ENCODE measurements at regions of chr5 and their contacts with region 1.

Region 1: DNA sequence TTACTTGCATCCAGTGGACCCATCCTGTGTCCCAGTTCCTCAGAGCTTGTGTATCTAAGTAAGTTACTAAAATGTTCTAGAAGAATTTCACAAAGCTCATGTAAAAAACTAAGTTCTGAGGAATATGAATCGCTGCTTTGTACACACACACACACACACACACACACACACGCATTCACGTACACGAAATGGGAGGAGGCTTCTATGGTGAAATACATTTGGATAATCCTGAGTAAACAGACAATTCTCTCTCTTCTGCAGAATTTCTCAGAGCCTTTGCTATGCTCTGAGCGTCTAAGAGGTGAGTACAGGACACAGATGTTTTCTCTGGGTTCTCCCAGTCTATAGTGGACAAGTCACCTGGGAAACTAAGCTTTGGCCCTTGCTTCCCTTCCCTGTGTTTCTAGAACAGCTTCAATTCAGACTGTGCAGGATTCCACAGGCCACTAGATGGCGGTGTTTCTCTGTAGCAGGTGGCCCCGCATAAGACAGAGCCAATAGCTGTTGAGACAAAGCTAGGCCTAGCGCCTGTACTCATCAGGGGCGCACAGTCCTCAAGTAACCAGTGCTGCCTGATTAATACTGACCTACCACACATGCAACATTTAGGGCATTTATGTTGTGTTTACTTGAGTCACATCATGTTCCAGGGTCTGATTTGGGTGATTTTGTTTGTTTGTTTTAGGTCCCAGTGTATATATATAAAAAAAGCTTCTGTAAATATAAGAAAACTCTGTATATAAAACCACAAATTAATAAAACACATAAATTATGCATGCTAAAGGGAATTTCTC is 114.8 kb downstream of the LIFR start:
- DNase-seq: peak; percentile 89 to 90
- H3K4me3 ChIP-seq: no peak overlapping the region
- H3K4me3 Mint-ChIP-seq: no peak overlapping the region
- H3K27ac Mint-ChIP-seq: no peak overlapping the region
- H3K4me1 ChIP-seq: no peaks in the 10 kb centered on the region
- H3K4me1 Mint-ChIP-seq: no peaks in the 10 kb centered on the region
- H3K27me3 ChIP-seq: no peaks in the 10 kb centered on the region
- H3K27me3 Mint-ChIP-seq: no peaks in the 10 kb centered on the region
- CTCF ChIP-seq: peak; percentile 93 to 97

Region 2: DNA sequence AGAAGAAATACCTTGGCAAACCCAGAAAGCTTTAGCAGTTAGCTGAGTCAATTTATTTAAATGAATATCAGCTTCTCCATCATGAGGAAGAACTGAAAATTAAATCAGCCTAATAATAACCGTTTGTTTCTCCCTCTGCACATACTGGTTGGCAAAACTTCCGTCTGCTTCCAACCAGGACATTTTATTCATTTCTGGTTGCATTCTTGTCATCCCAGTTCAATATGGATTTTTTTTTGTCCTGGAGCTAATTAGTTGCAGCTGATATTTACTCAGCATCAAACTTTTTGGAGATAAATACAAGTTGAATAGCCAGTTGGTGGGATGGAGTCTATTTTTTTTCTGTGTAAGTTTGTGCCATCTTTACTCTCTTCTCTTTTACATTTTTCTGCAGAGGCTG is 475.4 kb before region 1 on chr5:
- CTCF ChIA-PET with region 1: no interaction called
- POLR2A ChIA-PET with region 1: no interaction called
- intact Hi-C with region 1: no loop called
- DNase-seq: no peak
- H3K4me3 ChIP-seq: no peak overlapping the region
- H3K4me3 Mint-ChIP-seq: no peak overlapping the region
- H3K27ac Mint-ChIP-seq: no peak overlapping the region
- H3K4me1 ChIP-seq: no peaks in the 10 kb centered on the region
- H3K4me1 Mint-ChIP-seq: no peaks in the 10 kb centered on the region
- H3K27me3 ChIP-seq: no peaks in the 10 kb centered on the region
- H3K27me3 Mint-ChIP-seq: peaks cover 12% of the 10 kb centered on the region
- CTCF ChIP-seq: no peak

Region 3: GRCh38 chr5:38265546-38266179 is 176.0 kb before region 1 on chr5:
- CTCF ChIA-PET with region 1: no interaction called
- POLR2A ChIA-PET with region 1: no interaction called
- intact Hi-C with region 1: no loop called
- DNase-seq: peak; percentile 65 to 81
- H3K4me3 ChIP-seq: no peak overlapping the region
- H3K4me3 Mint-ChIP-seq: no peak overlapping the region
- H3K27ac Mint-ChIP-seq: no peak overlapping the region
- H3K4me1 ChIP-seq: no peaks in the 10 kb centered on the region; the same call in 1 of the 2 replicates
- H3K4me1 Mint-ChIP-seq: peaks cover 6% of the 10 kb centered on the region
- H3K27me3 ChIP-seq: no peaks in the 10 kb centered on the region; the same call in 1 of the 2 replicates
- H3K27me3 Mint-ChIP-seq: peaks cover 16% of the 10 kb centered on the region
- CTCF ChIP-seq: peak; percentile 79 to 82

Region 4: DNA sequence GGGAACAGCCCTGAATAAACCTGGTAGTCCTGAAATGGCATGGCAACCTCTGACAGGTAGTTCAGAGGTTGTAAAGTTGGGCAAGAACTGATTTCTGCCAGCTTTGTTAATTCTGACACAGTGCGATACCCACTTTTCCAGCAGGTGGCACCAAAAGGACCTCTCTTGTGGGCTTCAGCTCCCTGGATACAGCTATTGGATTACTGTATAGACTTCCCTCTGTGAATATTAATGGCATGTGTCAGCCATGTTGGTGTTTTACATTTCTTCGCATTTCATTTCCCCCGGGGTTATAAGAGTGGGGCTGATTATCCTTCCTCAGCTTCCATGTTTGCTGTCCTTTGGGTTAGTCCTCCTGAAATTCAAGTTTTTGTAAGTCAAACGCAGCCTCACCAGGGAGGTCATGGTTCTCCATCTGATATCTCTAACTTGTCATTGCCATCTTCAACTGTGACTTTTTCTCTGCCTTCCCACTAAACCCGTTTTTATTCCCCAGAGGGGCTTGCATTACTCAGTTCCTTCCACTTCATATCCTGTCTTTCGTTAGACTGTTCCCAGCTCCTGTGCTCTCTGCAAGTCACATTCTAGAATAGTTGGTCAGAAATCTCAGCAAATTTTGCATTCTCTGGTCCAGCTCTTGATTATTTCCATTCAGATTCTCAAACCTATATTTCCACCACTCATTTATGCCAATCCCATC is 20.8 kb before region 1 on chr5:
- CTCF ChIA-PET with region 1: interaction called, 64 read pairs
- POLR2A ChIA-PET with region 1: no interaction called
- intact Hi-C with region 1: loop called (anchors 1 kb)
- DNase-seq: peak; percentile 65 to 74
- H3K4me3 ChIP-seq: no peak overlapping the region
- H3K4me3 Mint-ChIP-seq: no peak overlapping the region
- H3K27ac Mint-ChIP-seq: no peak overlapping the region
- H3K4me1 ChIP-seq: no peaks in the 10 kb centered on the region
- H3K4me1 Mint-ChIP-seq: no peaks in the 10 kb centered on the region
- H3K27me3 ChIP-seq: no peaks in the 10 kb centered on the region
- H3K27me3 Mint-ChIP-seq: no peaks in the 10 kb centered on the region
- CTCF ChIP-seq: peak; percentile 69 to 79

Region 5: GRCh38 chr5:38483788-38484398 is 42.2 kb after region 1 on chr5:
- CTCF ChIA-PET with region 1: interaction called, 18 read pairs
- POLR2A ChIA-PET with region 1: no interaction called
- intact Hi-C with region 1: loop called (anchors 5 kb)
- DNase-seq: peak in 1 of 2 experiments; percentile 36
- H3K4me3 ChIP-seq: no peak overlapping the region
- H3K4me3 Mint-ChIP-seq: no peak overlapping the region
- H3K27ac Mint-ChIP-seq: no peak overlapping the region
- H3K4me1 ChIP-seq: peaks cover 4% of the 10 kb centered on the region; the same call in 1 of the 2 replicates
- H3K4me1 Mint-ChIP-seq: peaks cover 7% of the 10 kb centered on the region
- H3K27me3 ChIP-seq: no peaks in the 10 kb centered on the region
- H3K27me3 Mint-ChIP-seq: no peaks in the 10 kb centered on the region
- CTCF ChIP-seq: peak; percentile 27 to 40

Region 6: GRCh38 chr5:38551030-38552017 is 109.7 kb after region 1 on chr5:
- CTCF ChIA-PET with region 1: interaction called, 18 read pairs
- POLR2A ChIA-PET with region 1: no interaction called
- intact Hi-C with region 1: loop called (anchors 1 kb)
- DNase-seq: peak in 1 of 2 experiments; percentile 23
- H3K4me3 ChIP-seq: no peak overlapping the region
- H3K4me3 Mint-ChIP-seq: no peak overlapping the region
- H3K27ac Mint-ChIP-seq: peak overlapping the region; percentile 25
- H3K4me1 ChIP-seq: peaks cover 40% of the 10 kb centered on the region
- H3K4me1 Mint-ChIP-seq: peaks cover 12% of the 10 kb centered on the region
- H3K27me3 ChIP-seq: no peaks in the 10 kb centered on the region
- H3K27me3 Mint-ChIP-seq: no peaks in the 10 kb centered on the region
- CTCF ChIP-seq: peak; percentile 32 to 53

Region 7: DNA sequence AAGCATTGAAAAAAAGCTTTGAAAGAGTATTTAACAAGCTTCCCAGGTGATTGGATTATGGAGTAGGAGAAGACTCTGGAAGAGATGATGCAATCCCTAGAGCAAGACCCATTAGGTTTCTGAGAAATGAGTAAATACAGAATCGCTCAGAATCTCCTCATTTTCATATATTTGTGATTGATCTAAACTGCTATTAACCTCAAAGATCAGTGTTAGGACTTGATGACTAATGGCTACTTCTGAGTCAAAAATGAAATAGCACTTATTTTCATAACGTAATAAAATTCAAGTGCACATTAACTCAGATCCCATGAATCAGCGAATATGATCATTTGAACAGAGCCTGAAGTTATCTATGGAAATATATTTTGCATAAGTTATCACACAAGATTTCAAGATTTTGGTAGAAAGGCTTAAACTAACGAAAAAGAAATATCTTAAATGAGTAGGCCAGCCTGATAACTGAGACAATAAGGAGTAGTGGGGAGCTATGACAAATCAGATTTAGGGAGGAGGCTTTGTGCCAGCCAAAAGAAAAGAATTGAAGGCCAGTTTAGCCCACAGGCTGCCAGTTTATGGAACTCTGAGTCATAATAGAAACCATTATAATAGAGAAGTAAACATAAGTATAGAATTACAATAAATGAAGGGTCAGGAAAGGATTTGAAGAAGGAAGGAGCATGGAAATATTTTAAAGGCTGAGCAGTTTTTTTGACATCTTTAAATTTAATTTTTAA is 297.5 kb after region 1 on chr5:
- CTCF ChIA-PET with region 1: interaction called, 16 read pairs
- POLR2A ChIA-PET with region 1: no interaction called
- intact Hi-C with region 1: loop called (anchors 1 kb)
- DNase-seq: no peak
- H3K4me3 ChIP-seq: no peak overlapping the region
- H3K4me3 Mint-ChIP-seq: no peak overlapping the region
- H3K27ac Mint-ChIP-seq: no peak overlapping the region
- H3K4me1 ChIP-seq: no peaks in the 10 kb centered on the region
- H3K4me1 Mint-ChIP-seq: no peaks in the 10 kb centered on the region
- H3K27me3 ChIP-seq: no peaks in the 10 kb centered on the region
- H3K27me3 Mint-ChIP-seq: no peaks in the 10 kb centered on the region
- CTCF ChIP-seq: no peak

Region 8: DNA sequence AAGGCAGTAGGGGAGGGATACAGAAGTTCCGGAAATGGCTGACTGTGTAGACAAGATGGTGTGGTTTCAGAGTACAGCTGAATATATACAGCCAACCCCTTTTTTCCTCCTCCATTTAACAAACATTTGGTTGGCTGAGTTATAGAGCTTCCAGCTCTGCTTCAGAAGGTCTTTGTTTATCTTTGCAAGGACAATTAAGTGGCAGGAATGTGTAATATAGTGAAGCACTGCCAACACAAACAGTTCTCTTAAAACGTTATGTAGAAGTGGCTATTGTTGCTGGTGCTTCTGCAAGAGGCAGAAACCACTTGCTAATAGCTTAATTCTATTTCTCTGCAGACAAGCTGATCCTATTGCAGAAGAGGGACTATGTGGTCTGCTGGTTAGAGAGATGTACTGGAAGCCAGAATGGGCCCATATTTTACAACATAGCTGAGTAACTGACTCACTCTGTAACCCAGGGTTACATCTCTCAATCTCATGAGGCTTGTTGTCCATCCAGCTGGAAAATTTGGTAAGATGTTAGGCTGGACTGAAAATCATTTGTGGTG is 341.4 kb after region 1 on chr5:
- CTCF ChIA-PET with region 1: interaction called, 12 read pairs
- POLR2A ChIA-PET with region 1: no interaction called
- intact Hi-C with region 1: no loop called
- DNase-seq: peak in 1 of 2 experiments; percentile 6
- H3K4me3 ChIP-seq: no peak overlapping the region
- H3K4me3 Mint-ChIP-seq: no peak overlapping the region
- H3K27ac Mint-ChIP-seq: no peak overlapping the region
- H3K4me1 ChIP-seq: peaks cover 9% of the 10 kb centered on the region; the same call in 1 of the 2 replicates
- H3K4me1 Mint-ChIP-seq: no peaks in the 10 kb centered on the region
- H3K27me3 ChIP-seq: no peaks in the 10 kb centered on the region
- H3K27me3 Mint-ChIP-seq: no peaks in the 10 kb centered on the region
- CTCF ChIP-seq: no peak

Region 9: GRCh38 chr5:38922199-38922598 is 480.5 kb after region 1 on chr5:
- CTCF ChIA-PET with region 1: interaction called, 12 read pairs
- POLR2A ChIA-PET with region 1: no interaction called
- intact Hi-C with region 1: loop called (anchors 1 kb)
- DNase-seq: peak in 1 of 2 experiments; percentile 60
- H3K4me3 ChIP-seq: no peak overlapping the region
- H3K4me3 Mint-ChIP-seq: no peak overlapping the region
- H3K27ac Mint-ChIP-seq: no peak overlapping the region
- H3K4me1 ChIP-seq: no peaks in the 10 kb centered on the region
- H3K4me1 Mint-ChIP-seq: no peaks in the 10 kb centered on the region
- H3K27me3 ChIP-seq: no peaks in the 10 kb centered on the region
- H3K27me3 Mint-ChIP-seq: peaks cover 5% of the 10 kb centered on the region
- CTCF ChIP-seq: peak; percentile 74 to 83